AG04450 (cell line): ENCODE measurements at regions of chr1 and their contacts with region 1.

Region 1: DNA sequence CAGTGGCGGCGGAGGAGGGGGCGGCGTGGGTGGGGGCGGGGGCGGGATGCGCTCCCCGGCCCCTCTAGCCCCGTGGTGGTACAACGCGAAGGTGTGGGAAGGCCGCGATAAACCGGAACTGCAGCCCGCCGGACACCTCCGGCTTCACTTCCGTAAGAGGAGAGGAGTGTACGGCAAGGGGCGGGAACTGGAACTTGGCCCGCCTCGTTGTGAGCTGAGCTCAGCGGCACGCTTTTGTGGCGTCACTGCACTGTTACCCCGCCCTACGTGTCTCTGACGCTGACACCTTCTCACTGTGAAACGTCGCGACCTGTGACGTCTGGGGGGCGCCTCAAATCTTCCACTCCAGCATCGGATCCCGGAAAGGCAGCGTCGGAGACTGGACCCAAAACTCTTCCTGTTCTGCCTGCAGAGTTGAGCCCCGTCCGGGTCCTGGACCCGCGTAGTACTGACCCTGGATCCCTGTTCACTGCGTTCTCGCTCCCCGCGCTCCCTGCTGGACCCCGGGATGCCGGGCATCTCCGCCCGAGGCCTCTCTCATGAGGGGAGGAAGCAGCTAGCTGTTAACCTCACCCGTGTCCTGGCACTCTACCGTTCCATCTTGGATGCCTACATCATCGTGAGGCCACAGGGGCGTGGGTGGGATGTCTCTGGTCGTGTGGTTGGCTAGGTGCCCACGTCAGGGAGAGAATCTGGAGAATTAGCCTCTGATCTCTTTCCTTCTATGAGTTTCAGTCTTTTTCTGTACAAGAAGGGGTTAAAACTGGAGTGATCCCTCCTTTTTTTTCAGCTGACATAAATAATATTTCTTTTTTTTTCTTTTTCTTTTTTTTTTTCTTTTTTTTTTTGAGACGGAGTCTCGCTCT is at the start of gene ISG20L2:
- DNase-seq: peak; percentile 96
- H3K4me3 ChIP-seq: peak within 1 kb of the TSS; percentile 100
- H3K27ac ChIP-seq: peak within 1 kb of the TSS; percentile 95
- H3K27me3 ChIP-seq: no peaks in the 10 kb centered on the region
- CTCF ChIP-seq: 0 out of 2 replicates have a peak, but pooled peaks have one; percentile 13
- polyA plus RNA-seq, gene ISG20L2: 25.6 and 29.1 TPM in 2 replicates

Region 2: DNA sequence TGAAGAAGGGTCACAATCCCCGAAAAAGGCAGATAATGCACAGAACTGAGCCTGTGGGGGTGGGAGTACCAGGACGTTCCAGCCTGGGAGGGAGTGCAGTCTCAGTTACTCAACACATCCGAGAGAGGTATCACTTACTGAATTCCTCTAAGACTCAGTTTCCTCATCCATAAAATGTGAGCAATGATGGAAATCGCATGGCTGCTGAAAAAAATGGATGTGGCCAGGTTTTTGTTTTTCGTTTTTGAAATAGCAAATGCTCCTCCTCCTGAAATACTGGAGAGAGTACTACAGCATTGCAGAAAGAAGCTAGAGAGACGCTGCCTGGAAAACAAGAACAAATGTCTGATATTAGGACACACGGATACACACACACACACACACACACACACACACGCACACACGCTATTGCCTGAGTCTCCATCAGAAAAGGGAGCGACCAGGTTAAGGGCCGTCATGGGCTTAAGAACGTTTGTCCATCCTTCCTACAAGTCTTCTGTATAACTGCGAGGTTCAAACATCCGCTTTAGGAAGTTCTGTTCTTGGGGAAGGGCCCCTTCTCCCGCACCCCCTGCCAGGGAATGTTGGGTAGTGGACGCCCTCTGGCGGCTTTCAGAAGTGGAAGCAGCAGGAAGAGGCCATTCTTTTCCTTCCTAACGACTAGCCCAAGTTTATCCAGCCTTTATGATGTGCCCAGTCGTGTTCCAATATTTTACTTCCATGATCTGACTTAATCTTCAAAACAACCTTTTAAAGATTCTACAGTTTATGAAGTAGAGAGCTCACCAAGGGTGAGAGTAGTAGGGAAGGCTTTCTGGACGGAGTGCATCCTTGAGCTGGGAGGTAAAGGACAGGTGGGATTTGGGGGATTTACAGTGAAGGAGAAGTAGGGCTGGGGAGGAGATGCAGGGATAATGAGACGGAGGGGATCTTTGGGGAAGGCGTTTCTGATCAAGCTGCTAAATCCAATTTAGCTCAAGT is 50.9 kb before region 1 on chr1:
- CTCF ChIA-PET with region 1: interaction called, 75 read pairs
- POLR2A ChIA-PET with region 1: interaction called, 4 read pairs
- DNase-seq: no peak
- H3K4me3 ChIP-seq: peak overlapping the region; percentile 64
- H3K27ac ChIP-seq: peak overlapping the region; percentile 31
- H3K27me3 ChIP-seq: peaks cover 12% of the 10 kb centered on the region
- CTCF ChIP-seq: peak; percentile 96

Region 3: GRCh38 chr1:156705918-156706656 is 22.7 kb before region 1 on chr1:
- CTCF ChIA-PET with region 1: interaction called, 88 read pairs
- POLR2A ChIA-PET with region 1: interaction called, 5 read pairs
- DNase-seq: no peak
- H3K4me3 ChIP-seq: peak overlapping the region; percentile 52
- H3K27ac ChIP-seq: peak overlapping the region; percentile 57
- H3K27me3 ChIP-seq: no peaks in the 10 kb centered on the region
- CTCF ChIP-seq: peak; percentile 76

Region 4: DNA sequence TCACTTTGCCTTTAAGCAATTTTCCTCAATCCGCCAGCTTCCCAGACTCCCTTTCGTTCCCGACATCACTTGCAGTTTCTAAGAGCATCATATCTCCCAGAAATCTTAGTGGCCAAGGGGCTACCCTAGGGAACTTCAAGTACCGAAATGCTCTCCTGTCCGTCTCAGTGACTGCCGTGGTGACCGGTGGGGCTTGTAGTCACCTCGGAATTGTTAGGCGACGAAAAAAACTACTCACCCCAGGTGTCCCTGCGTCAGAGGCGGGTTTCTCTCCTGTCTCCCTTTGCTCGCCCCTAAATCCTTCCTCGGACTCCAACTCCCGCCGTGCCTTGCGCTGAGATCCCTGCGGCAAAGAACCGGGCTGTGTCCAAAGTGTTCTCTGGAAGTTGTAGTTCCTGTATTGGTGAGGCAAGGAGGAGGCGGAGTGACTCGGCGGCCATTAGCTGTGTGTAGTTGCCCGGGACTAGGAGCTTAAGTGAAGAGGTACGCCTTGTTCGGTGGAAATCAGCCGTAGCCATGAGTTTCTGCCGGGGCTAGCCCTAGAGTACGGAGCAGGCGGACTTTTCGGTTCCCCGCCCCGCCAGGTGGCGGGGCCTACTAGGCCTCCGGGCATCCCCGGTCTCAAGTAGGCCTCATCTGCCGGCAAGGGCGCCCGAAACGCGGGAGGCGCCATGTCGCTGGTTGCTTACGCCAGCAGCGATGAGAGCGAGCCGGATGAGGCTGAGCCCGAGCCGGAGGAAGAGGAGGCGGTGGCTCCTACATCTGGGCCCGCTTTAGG is 38.5 kb after region 1 on chr1 and contains the start of gene PRCC:
- CTCF ChIA-PET with region 1: interaction called, 18 read pairs
- POLR2A ChIA-PET with region 1: interaction called, 8 read pairs
- DNase-seq: peak; percentile 100
- H3K4me3 ChIP-seq: peak within 1 kb of the TSS; percentile 95
- H3K27ac ChIP-seq: peak within 1 kb of the TSS; percentile 77
- H3K27me3 ChIP-seq: no peaks in the 10 kb centered on the region
- CTCF ChIP-seq: no peak
- polyA plus RNA-seq, gene PRCC: 51.1 and 58.6 TPM in 2 replicates

Region 5: GRCh38 chr1:156838981-156839410 is 110.2 kb after region 1 on chr1:
- CTCF ChIA-PET with region 1: interaction called, 10 read pairs
- POLR2A ChIA-PET with region 1: no interaction called
- DNase-seq: no peak
- H3K4me3 ChIP-seq: no peak overlapping the region
- H3K27ac ChIP-seq: no peak overlapping the region
- H3K27me3 ChIP-seq: peaks cover 76% of the 10 kb centered on the region
- CTCF ChIP-seq: peak; percentile 92

Region 6: GRCh38 chr1:156927215-156928042 is 198.6 kb after region 1 on chr1:
- CTCF ChIA-PET with region 1: interaction called, 18 read pairs
- POLR2A ChIA-PET with region 1: interaction called, 3 read pairs
- DNase-seq: peak; percentile 26
- H3K4me3 ChIP-seq: peak overlapping the region; percentile 50
- H3K27ac ChIP-seq: no peak overlapping the region
- H3K27me3 ChIP-seq: peaks cover 47% of the 10 kb centered on the region
- CTCF ChIP-seq: peak; percentile 81